CD8-positive, alpha-beta memory T cell (primary cell): ENCODE measurements at regions of chr6 and their contacts with region 1.

Region 1: GRCh38 chr6:1596088-1596852 is 13.4 kb upstream of the FOXC1 start:
- DNase-seq: peak; percentile 43 to 71 (median 59)
- H3K4me3 ChIP-seq: no peak overlapping the region
- H3K4me3 Mint-ChIP-seq: no peak overlapping the region
- H3K27ac ChIP-seq: no peak overlapping the region
- H3K27ac Mint-ChIP-seq: peak overlapping the region in 1 of 8 donors; percentile 7
- H3K4me1 ChIP-seq: peaks cover 7% of the 10 kb centered on the region
- H3K4me1 Mint-ChIP-seq: peaks cover 3 to 8% (median 7%) of the 10 kb centered on the region in 3 donors
- H3K27me3 ChIP-seq: peaks cover 47% of the 10 kb centered on the region
- H3K27me3 Mint-ChIP-seq: peaks cover 45 to 71% of the 10 kb centered on the region in 2 donors

Region 2: GRCh38 chr6:2353412-2354137 is 757.3 kb after region 1 on chr6:
- CTCF ChIA-PET with region 1: interaction called, 12 read pairs
- POLR2A ChIA-PET with region 1: no interaction called
- DNase-seq: peak; percentile 4 to 57 (median 12)
- H3K4me3 ChIP-seq: no peak overlapping the region
- H3K4me3 Mint-ChIP-seq: no peak overlapping the region
- H3K27ac ChIP-seq: no peak overlapping the region
- H3K27ac Mint-ChIP-seq: no peak overlapping the region
- H3K4me1 ChIP-seq: no peaks in the 10 kb centered on the region
- H3K4me1 Mint-ChIP-seq: no peaks in the 10 kb centered on the region
- H3K27me3 ChIP-seq: no peaks in the 10 kb centered on the region
- H3K27me3 Mint-ChIP-seq: no peaks in the 10 kb centered on the region